ENCODE measurements at regions of chr7 and their contacts with region 1.

Region 1: GRCh38 chr7:142568435-142569097 is 180.7 kb upstream of the PRSS1 start:
- DNase-seq: peak; percentile 92
- ATAC-seq: peak; percentile 95
- H3K4me3 ChIP-seq: peak overlapping the region; percentile 34; the same call in 1 of the 2 replicates
- H3K27ac ChIP-seq: peak overlapping the region; percentile 78
- H3K4me1 ChIP-seq: peaks cover 36% of the 10 kb centered on the region
- H3K27me3 ChIP-seq: no peaks in the 10 kb centered on the region
- CTCF ChIP-seq: no peak

Region 2: GRCh38 chr7:142557971-142558582 is 10.5 kb before region 1 on chr7:
- CTCF ChIA-PET with region 1: no interaction called
- POLR2A ChIA-PET with region 1: interaction called, 3 read pairs
- intact Hi-C with region 1: loop called (anchors 1 kb)
- DNase-seq: peak; percentile 79
- ATAC-seq: peak; percentile 20; the same call in 1 of the 2 replicates
- H3K4me3 ChIP-seq: no peak overlapping the region
- H3K27ac ChIP-seq: peak overlapping the region; percentile 58; the same call in 1 of the 2 replicates
- H3K4me1 ChIP-seq: peaks cover 67% of the 10 kb centered on the region
- H3K27me3 ChIP-seq: no peaks in the 10 kb centered on the region
- CTCF ChIP-seq: peak; percentile 92

Region 3: GRCh38 chr7:142587578-142588191 is 19.1 kb after region 1 on chr7:
- CTCF ChIA-PET with region 1: interaction called, 4 read pairs
- POLR2A ChIA-PET with region 1: no interaction called
- intact Hi-C with region 1: loop called (anchors 2 kb)
- DNase-seq: peak; percentile 82
- ATAC-seq: peak; percentile 75
- H3K4me3 ChIP-seq: no peak overlapping the region
- H3K27ac ChIP-seq: no peak overlapping the region
- H3K4me1 ChIP-seq: peaks cover 25% of the 10 kb centered on the region
- H3K27me3 ChIP-seq: no peaks in the 10 kb centered on the region
- CTCF ChIP-seq: peak; percentile 96

Measured in PC-3 (cell line).